MCF 10A (cell line): ENCODE measurements at regions of chr1 and their contacts with region 1.

Region 1: GRCh38 chr1:226702957-226703831 is 35.9 kb downstream of the ITPKB start:
- DNase-seq: peak; percentile 75
- H3K4me3 Mint-ChIP-seq: peak overlapping the region; percentile 62
- H3K27ac Mint-ChIP-seq: peak overlapping the region; percentile 9
- H3K4me1 Mint-ChIP-seq: peaks cover 14% of the 10 kb centered on the region
- H3K27me3 Mint-ChIP-seq: no peaks in the 10 kb centered on the region
- CTCF ChIP-seq: no peak

Region 2: GRCh38 chr1:226679853-226680516 is 23.2 kb before region 1 on chr1:
- CTCF ChIA-PET with region 1: interaction called, 4 read pairs
- POLR2A ChIA-PET with region 1: interaction called, 42 read pairs
- intact Hi-C with region 1: loop called (anchors 2 kb)
- DNase-seq: no peak
- H3K4me3 Mint-ChIP-seq: no peak overlapping the region
- H3K27ac Mint-ChIP-seq: no peak overlapping the region
- H3K4me1 Mint-ChIP-seq: peaks cover 24% of the 10 kb centered on the region
- H3K27me3 Mint-ChIP-seq: no peaks in the 10 kb centered on the region
- CTCF ChIP-seq: no peak

Region 3: GRCh38 chr1:226687426-226687825 is 15.8 kb before region 1 on chr1:
- CTCF ChIA-PET with region 1: interaction called, 7 read pairs
- POLR2A ChIA-PET with region 1: interaction called, 41 read pairs
- intact Hi-C with region 1: no loop called
- DNase-seq: peak; percentile 39
- H3K4me3 Mint-ChIP-seq: no peak overlapping the region
- H3K27ac Mint-ChIP-seq: no peak overlapping the region
- H3K4me1 Mint-ChIP-seq: peaks cover 5% of the 10 kb centered on the region
- H3K27me3 Mint-ChIP-seq: no peaks in the 10 kb centered on the region
- CTCF ChIP-seq: peak; percentile 19

Region 4: GRCh38 chr1:226827968-226828513 is 124.8 kb after region 1 on chr1:
- CTCF ChIA-PET with region 1: interaction called, 4 read pairs
- POLR2A ChIA-PET with region 1: no interaction called
- intact Hi-C with region 1: loop called (anchors 2 kb)
- DNase-seq: peak; percentile 100
- H3K4me3 Mint-ChIP-seq: no peak overlapping the region
- H3K27ac Mint-ChIP-seq: no peak overlapping the region
- H3K4me1 Mint-ChIP-seq: no peaks in the 10 kb centered on the region
- H3K27me3 Mint-ChIP-seq: no peaks in the 10 kb centered on the region
- CTCF ChIP-seq: peak; percentile 100

Region 5: GRCh38 chr1:226973898-226974543 is 270.8 kb after region 1 on chr1:
- CTCF ChIA-PET with region 1: no interaction called
- POLR2A ChIA-PET with region 1: no interaction called
- intact Hi-C with region 1: no loop called
- DNase-seq: peak; percentile 80
- H3K4me3 Mint-ChIP-seq: peak overlapping the region; percentile 38
- H3K27ac Mint-ChIP-seq: peak overlapping the region; percentile 96
- H3K4me1 Mint-ChIP-seq: peaks cover 24% of the 10 kb centered on the region
- H3K27me3 Mint-ChIP-seq: no peaks in the 10 kb centered on the region
- CTCF ChIP-seq: no peak

Region 6: DNA sequence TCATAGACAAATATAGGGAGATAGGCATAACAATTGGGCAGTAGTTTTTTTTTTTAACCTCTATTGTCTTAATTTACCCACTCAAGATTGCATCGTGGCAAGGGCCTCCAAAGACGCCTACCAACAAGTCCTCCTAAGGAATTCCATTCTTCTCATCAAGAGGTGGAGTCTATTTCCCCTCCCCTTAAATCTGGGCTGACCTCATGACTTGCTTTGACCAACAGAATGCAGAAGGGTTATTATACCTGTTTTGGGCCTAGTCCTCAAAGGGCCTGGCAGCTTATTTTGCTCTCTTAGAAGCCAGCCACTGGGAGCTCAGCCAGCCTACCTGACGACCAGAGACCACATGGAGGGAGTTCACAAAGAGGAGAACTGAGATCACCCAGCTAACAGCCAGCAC is 329.2 kb after region 1 on chr1:
- CTCF ChIA-PET with region 1: no interaction called
- POLR2A ChIA-PET with region 1: no interaction called
- intact Hi-C with region 1: no loop called
- DNase-seq: no peak
- H3K4me3 Mint-ChIP-seq: no peak overlapping the region
- H3K27ac Mint-ChIP-seq: no peak overlapping the region
- H3K4me1 Mint-ChIP-seq: no peaks in the 10 kb centered on the region
- H3K27me3 Mint-ChIP-seq: no peaks in the 10 kb centered on the region
- CTCF ChIP-seq: no peak